ENCODE measurements at regions of chr2 and their contacts with region 1.

Region 1: GRCh38 chr2:6877402-6878304 is at the start of gene RSAD2:
- DNase-seq: peak in 7 of 10 donors; percentile 9 to 68 (median 38)
- ATAC-seq: peak; percentile 81 to 84
- H3K4me3 Mint-ChIP-seq: peak within 1 kb of the TSS; percentile 85 to 98 (median 90)
- H3K27ac Mint-ChIP-seq: peak within 1 kb of the TSS; percentile 86 to 98 (median 93)
- H3K4me1 Mint-ChIP-seq: peaks cover 34 to 88% (median 68%) of the 10 kb centered on the region in 4 donors
- H3K27me3 Mint-ChIP-seq: no peaks in the 10 kb centered on the region
- polyA plus RNA-seq, gene RSAD2: 4.0 to 11.1 (median 6.5) TPM

Region 2: DNA sequence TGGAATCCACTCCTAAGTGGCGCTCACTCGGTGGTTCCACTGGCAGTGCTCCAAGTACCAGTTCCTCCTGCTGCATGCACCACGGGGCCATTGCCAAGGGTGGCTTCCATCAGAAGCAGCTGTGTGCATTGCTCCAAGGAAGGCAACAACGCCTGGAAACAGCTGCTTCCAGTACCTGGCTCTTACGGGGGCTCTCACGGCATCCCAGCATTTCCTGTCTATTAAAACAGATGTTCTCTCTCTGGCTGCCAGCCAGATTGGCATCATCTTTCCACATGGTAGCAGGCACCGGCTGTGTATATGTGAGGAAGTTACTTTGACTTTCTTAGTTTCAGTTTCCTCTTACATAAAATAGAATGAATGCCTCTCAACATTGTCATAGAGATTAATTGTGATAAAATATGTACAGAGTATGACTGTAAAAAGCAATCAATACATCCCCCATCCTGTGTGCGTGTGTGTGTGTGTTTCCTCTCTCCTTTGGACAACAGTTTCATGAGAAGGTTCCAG is 96.8 kb before region 1 on chr2:
- POLR2A ChIA-PET with region 1: no interaction called
- DNase-seq: peak in 1 of 10 donors; percentile 2
- ATAC-seq: peak in 1 of 2 donors; percentile 43
- H3K4me3 Mint-ChIP-seq: peak overlapping the region in 9 of 10 donors; percentile 1 to 67 (median 38)
- H3K27ac Mint-ChIP-seq: peak overlapping the region in 2 of 10 donors; percentile 17 to 22
- H3K4me1 Mint-ChIP-seq: peaks cover 3 to 15% (median 12%) of the 10 kb centered on the region in 4 donors
- H3K27me3 Mint-ChIP-seq: peaks cover 0 to 2% (median 0%) of the 10 kb centered on the region in 5 donors

Region 3: DNA sequence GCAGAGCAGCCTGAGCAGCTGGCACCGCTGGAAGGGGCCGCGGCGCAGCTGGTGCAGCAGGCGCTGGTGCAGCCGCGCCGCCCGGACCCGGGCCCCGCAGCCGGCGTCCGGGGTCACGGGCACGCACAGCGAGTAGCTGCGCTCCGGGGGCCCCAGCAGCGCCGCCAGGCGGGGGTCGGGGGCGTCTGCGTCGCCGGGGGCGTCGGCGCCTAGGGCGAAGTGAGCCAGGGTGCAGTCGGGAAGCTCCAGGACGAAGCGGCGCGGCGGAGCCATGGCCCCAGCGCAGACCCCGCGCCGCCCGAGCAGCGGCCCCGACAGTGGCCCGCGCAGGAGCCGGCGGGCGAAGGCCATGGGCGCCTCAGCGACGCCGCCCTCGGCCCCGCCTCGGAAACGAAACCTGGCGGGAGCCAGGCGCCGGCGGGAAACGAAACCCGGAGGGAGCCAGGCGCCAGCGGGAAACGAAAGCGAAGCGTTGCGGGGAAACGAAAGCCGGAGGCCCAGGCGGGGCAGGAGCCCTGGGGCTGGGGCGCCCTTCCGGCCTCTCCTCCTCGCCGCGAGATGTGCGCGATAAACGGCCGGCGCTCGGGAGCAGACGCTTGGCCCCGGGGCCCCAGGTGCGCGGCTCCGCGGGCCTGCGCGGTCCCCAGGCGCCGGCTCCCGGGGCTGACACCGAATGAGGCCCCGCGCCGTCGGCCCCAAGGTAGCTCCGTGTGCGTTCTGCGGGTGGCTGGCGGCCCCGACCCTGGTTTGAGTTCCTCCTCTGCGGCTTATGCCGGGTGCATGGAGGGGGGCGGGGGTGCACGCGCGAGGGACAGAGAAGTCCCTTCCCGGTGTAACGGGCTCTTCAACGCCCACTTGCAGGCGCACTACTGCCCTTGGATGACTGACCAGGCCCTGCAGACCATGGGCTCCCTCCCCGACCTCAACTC is 12.0 kb before region 1 on chr2 and contains the start of gene CMPK2:
- POLR2A ChIA-PET with region 1: interaction called, 61 read pairs
- DNase-seq: peak; percentile 67 to 84 (median 76)
- ATAC-seq: peak; percentile 76
- H3K4me3 Mint-ChIP-seq: peak within 1 kb of the TSS; percentile 90 to 100 (median 97)
- H3K27ac Mint-ChIP-seq: peak within 1 kb of the TSS; percentile 87 to 100 (median 94)
- H3K4me1 Mint-ChIP-seq: peaks cover 10 to 46% (median 26%) of the 10 kb centered on the region in 4 donors
- H3K27me3 Mint-ChIP-seq: no peaks in the 10 kb centered on the region
- polyA plus RNA-seq, gene CMPK2: 4.5 to 7.3 (median 4.6) TPM

Measured in naive thymus-derived CD8-positive, alpha-beta T cell (primary cell).